Activated CD8-positive, alpha-beta memory T cell treated with anti-CD3 and anti-CD28 coated beads, Interleukin-2, amount 10 ng/mL, durations not matched to agents 7 days and 5 days (primary cell): ENCODE measurements at regions of chr4 and their contacts with region 1.

Region 1: GRCh38 chr4:81069706-81070331 is 39.3 kb downstream of the BMP3 start:
- DNase-seq: peak; percentile 78
- ATAC-seq: peak; percentile 82
- H3K4me3 Mint-ChIP-seq: no peak overlapping the region
- H3K27ac Mint-ChIP-seq: no peak overlapping the region
- H3K4me1 Mint-ChIP-seq: no peaks in the 10 kb centered on the region
- H3K27me3 Mint-ChIP-seq: peaks cover 22% of the 10 kb centered on the region

Region 2: GRCh38 chr4:81084029-81084428 is 14.2 kb after region 1 on chr4:
- CTCF ChIA-PET with region 1: interaction called, 12 read pairs
- DNase-seq: no peak
- ATAC-seq: no peak
- H3K4me3 Mint-ChIP-seq: no peak overlapping the region
- H3K27ac Mint-ChIP-seq: no peak overlapping the region
- H3K4me1 Mint-ChIP-seq: no peaks in the 10 kb centered on the region
- H3K27me3 Mint-ChIP-seq: peaks cover 4% of the 10 kb centered on the region

Region 3: GRCh38 chr4:81351654-81352445 is 282.0 kb after region 1 on chr4:
- CTCF ChIA-PET with region 1: interaction called, 33 read pairs
- DNase-seq: peak; percentile 75
- ATAC-seq: peak; percentile 49
- H3K4me3 Mint-ChIP-seq: no peak overlapping the region
- H3K27ac Mint-ChIP-seq: no peak overlapping the region
- H3K4me1 Mint-ChIP-seq: no peaks in the 10 kb centered on the region
- H3K27me3 Mint-ChIP-seq: no peaks in the 10 kb centered on the region